ENCODE measurements at regions of chr7 and their contacts with region 1.

Region 1: GRCh38 chr7:12490117-12490688 is 80.3 kb upstream of the SCIN start:
- DNase-seq: no peak
- H3K4me3 Mint-ChIP-seq: no peak overlapping the region
- H3K27ac Mint-ChIP-seq: no peak overlapping the region
- H3K4me1 Mint-ChIP-seq: no peaks in the 10 kb centered on the region
- H3K27me3 Mint-ChIP-seq: no peaks in the 10 kb centered on the region

Region 2: DNA sequence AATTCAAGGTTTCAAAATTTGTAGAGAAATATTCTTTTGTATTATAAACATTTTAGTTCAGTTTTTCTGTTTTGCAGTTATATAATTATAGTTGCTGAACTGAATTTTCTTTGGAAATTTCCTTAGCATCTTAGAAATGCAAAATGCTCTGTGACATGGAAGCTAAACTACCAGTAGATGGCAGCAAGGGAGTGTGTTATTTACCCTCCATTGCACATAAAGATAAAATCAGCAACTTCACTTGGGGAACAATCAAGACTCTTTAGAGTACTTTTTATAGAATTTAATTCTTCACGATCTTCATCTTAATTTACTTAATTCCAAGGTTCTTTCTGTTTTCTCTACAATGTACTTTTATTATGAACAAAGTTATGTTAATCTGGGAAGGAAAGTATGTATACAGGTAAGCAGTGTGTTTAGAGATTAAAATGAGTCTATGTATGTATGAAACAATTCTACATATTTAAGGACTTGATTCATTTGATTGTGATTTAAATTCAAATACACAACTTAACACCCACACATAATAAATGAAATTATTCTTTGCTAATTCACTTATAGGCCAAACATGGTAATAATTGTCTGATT is 1062.4 kb before region 1 on chr7:
- CTCF ChIA-PET with region 1: no interaction called
- intact Hi-C with region 1: loop called (anchors 2 kb)
- DNase-seq: peak; percentile 6
- H3K4me3 Mint-ChIP-seq: no peak overlapping the region
- H3K27ac Mint-ChIP-seq: no peak overlapping the region
- H3K4me1 Mint-ChIP-seq: no peaks in the 10 kb centered on the region
- H3K27me3 Mint-ChIP-seq: no peaks in the 10 kb centered on the region

Region 3: GRCh38 chr7:12067141-12067831 is 422.9 kb before region 1 on chr7:
- CTCF ChIA-PET with region 1: interaction called, 3 read pairs
- intact Hi-C with region 1: loop called (anchors 1 kb)
- DNase-seq: peak; percentile 71
- H3K4me3 Mint-ChIP-seq: no peak overlapping the region
- H3K27ac Mint-ChIP-seq: no peak overlapping the region
- H3K4me1 Mint-ChIP-seq: peaks cover 15% of the 10 kb centered on the region
- H3K27me3 Mint-ChIP-seq: no peaks in the 10 kb centered on the region

Region 4: GRCh38 chr7:12357508-12357907 is 132.7 kb before region 1 on chr7:
- CTCF ChIA-PET with region 1: no interaction called
- intact Hi-C with region 1: no loop called
- DNase-seq: no peak
- H3K4me3 Mint-ChIP-seq: no peak overlapping the region
- H3K27ac Mint-ChIP-seq: no peak overlapping the region
- H3K4me1 Mint-ChIP-seq: no peaks in the 10 kb centered on the region
- H3K27me3 Mint-ChIP-seq: peaks cover 4% of the 10 kb centered on the region

Region 5: GRCh38 chr7:12389089-12389700 is 101.0 kb before region 1 on chr7:
- CTCF ChIA-PET with region 1: interaction called, 16 read pairs
- intact Hi-C with region 1: loop called (anchors 1 kb)
- DNase-seq: peak; percentile 64
- H3K4me3 Mint-ChIP-seq: no peak overlapping the region
- H3K27ac Mint-ChIP-seq: no peak overlapping the region
- H3K4me1 Mint-ChIP-seq: no peaks in the 10 kb centered on the region
- H3K27me3 Mint-ChIP-seq: no peaks in the 10 kb centered on the region

Region 6: DNA sequence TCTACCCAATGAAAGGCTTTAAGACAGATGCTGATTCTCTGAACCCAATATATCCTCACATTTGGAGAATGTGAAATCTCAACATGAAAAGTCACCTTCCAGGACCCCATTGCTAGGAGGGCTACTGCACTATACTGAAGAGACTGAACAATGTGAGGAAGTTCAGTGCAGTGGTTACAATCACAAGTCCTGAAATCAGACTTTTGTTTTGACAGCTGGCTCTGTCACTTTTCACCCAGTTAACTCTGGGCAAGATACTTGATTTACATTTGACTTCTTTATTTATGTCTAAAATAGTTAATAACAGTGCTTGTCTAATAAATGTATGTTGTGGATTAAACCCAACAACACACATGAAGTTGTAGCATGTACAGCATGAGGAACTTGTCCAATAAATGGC is 71.8 kb before region 1 on chr7:
- CTCF ChIA-PET with region 1: no interaction called
- intact Hi-C with region 1: no loop called
- DNase-seq: no peak
- H3K4me3 Mint-ChIP-seq: no peak overlapping the region
- H3K27ac Mint-ChIP-seq: no peak overlapping the region
- H3K4me1 Mint-ChIP-seq: no peaks in the 10 kb centered on the region
- H3K27me3 Mint-ChIP-seq: peaks cover 4% of the 10 kb centered on the region

Region 7: DNA sequence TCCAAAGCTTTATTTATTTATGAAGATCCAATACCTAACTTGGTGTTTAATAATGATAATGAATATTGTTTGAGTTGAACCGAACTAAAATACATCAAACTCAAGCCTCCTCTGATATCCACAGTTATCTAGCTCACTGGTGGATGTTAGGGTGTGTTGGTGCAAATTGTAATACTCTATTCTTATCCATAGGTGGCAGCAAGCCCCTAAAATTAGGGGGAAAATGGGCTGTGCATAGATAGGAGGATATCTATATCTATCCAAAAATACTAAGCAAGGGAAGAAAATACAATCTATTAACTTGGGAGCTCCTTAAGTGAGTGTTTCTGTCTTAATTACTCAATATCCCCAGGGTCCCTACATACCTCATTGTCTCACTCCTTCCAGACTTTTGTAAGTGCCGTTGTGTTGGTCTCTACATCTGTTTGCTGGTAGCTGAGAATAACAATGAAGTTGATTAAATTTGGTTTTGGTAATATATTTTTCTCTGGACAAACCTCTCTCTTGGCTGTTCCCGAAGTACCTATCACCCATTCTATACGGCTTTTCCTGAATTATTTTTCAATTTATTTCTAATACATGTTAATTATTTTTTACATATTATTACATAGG is 31.6 kb before region 1 on chr7:
- CTCF ChIA-PET with region 1: interaction called, 98 read pairs
- intact Hi-C with region 1: loop called (anchors 1 kb)
- DNase-seq: no peak
- H3K4me3 Mint-ChIP-seq: no peak overlapping the region
- H3K27ac Mint-ChIP-seq: no peak overlapping the region
- H3K4me1 Mint-ChIP-seq: no peaks in the 10 kb centered on the region
- H3K27me3 Mint-ChIP-seq: peaks cover 11% of the 10 kb centered on the region

Measured in activated naive CD4-positive, alpha-beta T cell treated with anti-CD3 and anti-CD28 coated beads for 36 hours (primary cell).